Sigmoid colon (tissue), 7 donors: ENCODE measurements at regions of chr2 and their contacts with region 1.

Region 1: DNA sequence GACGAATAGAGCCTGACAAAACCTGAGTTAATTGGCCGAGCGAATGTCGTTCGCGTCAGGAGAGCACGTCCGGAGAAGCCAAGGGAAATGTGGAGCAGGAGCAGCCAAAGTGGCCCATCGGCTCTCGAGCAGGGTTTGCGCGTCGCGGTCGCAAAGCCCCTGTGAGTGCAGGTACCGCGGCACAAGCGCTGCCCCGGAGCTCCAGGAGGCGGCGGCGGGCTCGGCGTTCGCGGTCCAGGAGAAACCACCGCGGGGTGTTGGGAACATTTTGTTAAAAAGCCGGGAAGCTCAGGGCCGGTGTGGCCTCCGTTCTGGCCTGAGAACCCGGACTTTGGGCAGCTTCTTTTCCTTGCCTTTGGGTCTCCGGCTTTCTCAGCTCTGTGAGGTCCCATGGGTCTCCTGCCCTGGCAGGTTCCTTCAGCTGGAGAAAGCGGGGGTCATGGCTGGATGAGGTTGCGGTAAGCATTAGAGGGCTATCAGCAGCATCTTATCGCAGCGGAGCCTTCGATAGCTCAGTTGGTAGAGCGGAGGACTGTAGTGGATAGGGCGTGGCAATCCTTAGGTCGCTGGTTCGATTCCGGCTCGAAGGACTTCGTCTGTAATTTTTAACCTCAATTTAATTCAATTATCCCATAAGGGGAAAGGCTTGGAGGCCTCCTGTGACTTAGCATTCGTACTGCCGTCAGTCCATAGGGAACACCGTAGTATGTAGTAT is 1.0 kb upstream of the AGBL5 start:
- DNase-seq: peak; percentile 96
- H3K4me3 ChIP-seq: peak overlapping the region; percentile 77 to 91 (median 84)
- H3K27ac ChIP-seq: peak overlapping the region; percentile 90 to 96 (median 92)
- H3K4me1 ChIP-seq: peaks cover 0 to 26% (median 17%) of the 10 kb centered on the region in 4 donors
- H3K27me3 ChIP-seq: no peaks in the 10 kb centered on the region
- CTCF ChIP-seq: peak; percentile 51 to 77 (median 62)
- EP300 ChIP-seq: no peak
- POLR2A ChIP-seq: no peak

Region 2: DNA sequence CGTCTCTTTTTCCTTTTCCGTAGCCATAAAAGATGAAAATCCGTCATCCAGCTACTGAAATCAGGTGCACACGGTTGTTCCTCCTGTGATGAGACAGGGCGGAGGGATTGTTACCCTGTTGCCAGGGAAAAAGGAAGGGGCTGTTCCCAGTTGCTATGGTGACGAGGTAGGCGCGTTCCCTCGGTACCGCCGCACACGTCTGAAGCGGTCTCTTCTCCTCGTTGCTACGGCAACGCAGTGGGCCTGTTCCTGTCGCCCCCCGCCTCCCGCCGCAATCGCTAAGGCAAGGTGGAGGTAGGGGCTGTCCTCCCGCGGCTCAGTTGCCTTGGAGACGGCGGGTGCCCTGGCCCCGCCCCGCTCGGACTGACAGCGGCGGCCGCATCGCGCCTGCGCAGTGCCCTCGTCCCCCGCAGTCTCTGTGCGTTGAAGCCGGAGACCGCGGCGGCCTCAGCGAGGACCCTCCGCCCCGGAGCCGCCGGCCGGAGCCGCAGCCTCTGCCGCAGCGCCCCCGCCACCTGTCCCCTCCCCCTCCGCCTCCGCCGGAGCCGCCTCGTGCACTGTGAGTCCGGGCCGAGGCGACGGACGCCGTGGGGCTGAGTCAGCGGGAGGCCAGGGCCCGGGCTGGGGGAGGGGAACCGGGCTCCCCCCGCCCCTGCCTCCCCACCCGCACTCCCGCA is 80.1 kb before region 1 on chr2 and contains the start of gene MAPRE3:
- intact Hi-C with region 1: no loop called
- DNase-seq: peak; percentile 88
- H3K4me3 ChIP-seq: peak within 1 kb of the TSS; percentile 62 to 95 (median 82)
- H3K27ac ChIP-seq: peak within 1 kb of the TSS; percentile 76 to 88 (median 86)
- H3K4me1 ChIP-seq: peaks cover 0 to 24% (median 17%) of the 10 kb centered on the region in 4 donors
- H3K27me3 ChIP-seq: no peaks in the 10 kb centered on the region
- CTCF ChIP-seq: no peak
- EP300 ChIP-seq: no peak
- POLR2A ChIP-seq: no peak
- total RNA-seq, gene MAPRE3: 5.1 to 27.4 (median 8.9) TPM

Region 3: DNA sequence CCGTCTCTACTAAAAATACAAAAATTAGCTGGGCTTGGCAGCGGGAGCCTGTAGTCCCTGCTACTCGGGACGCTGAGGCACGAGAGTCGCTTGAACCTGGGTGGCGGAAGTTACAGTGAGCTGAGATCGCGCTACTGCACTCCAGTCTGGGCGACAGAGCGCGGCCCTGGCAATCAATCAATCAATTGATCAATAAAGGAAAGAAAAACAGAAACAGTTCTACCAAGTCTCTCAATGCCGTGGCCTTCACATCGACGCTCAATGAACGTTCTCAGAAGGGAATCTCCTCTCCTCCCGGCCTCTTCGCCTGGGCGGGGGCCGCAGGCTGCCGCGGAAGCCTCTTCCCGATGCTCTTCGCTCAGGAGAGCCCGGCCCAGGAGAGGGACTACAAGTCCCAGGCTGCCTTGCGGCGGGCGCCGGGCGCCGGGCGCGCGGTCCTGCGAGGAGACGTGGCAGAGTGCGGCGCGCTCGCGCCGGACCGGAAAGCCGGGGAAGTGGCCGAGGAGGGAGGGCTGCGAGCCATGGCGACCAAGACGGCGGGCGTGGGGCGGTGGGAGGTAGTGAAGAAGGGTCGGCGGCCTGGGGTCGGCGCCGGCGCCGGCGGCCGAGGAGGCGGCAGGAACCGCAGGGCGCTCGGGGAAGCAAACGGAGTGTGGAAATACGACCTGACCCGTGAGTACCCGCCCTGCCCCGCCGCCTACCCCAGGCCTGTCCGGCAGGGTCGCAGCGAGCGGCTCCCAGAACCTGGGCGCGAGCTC is 17.8 kb before region 1 on chr2 and contains the start of gene TMEM214:
- intact Hi-C with region 1: loop called (anchors 1 kb)
- DNase-seq: peak; percentile 95
- H3K4me3 ChIP-seq: peak within 1 kb of the TSS; percentile 79 to 97 (median 84)
- H3K27ac ChIP-seq: peak within 1 kb of the TSS; percentile 81 to 89 (median 84)
- H3K4me1 ChIP-seq: peaks cover 0 to 30% (median 23%) of the 10 kb centered on the region in 4 donors
- H3K27me3 ChIP-seq: no peaks in the 10 kb centered on the region
- CTCF ChIP-seq: no peak
- EP300 ChIP-seq: no peak
- POLR2A ChIP-seq: peak; percentile 45 to 59
- total RNA-seq, gene TMEM214: 26.4 to 39.4 (median 35.0) TPM

Region 4: GRCh38 chr2:27071277-27071989 is 21.0 kb after region 1 on chr2 and contains the start of gene OST4:
- intact Hi-C with region 1: loop called (anchors 1 kb)
- DNase-seq: peak; percentile 97
- H3K4me3 ChIP-seq: peak within 1 kb of the TSS; percentile 70 to 94 (median 84)
- H3K27ac ChIP-seq: peak within 1 kb of the TSS; percentile 94 to 98 (median 97)
- H3K4me1 ChIP-seq: peaks cover 0 to 74% (median 68%) of the 10 kb centered on the region in 4 donors
- H3K27me3 ChIP-seq: no peaks in the 10 kb centered on the region
- CTCF ChIP-seq: no peak
- EP300 ChIP-seq: no peak
- POLR2A ChIP-seq: peak; percentile 63 to 76
- total RNA-seq, gene OST4: 244 to 428 (median 382) TPM

Region 5: DNA sequence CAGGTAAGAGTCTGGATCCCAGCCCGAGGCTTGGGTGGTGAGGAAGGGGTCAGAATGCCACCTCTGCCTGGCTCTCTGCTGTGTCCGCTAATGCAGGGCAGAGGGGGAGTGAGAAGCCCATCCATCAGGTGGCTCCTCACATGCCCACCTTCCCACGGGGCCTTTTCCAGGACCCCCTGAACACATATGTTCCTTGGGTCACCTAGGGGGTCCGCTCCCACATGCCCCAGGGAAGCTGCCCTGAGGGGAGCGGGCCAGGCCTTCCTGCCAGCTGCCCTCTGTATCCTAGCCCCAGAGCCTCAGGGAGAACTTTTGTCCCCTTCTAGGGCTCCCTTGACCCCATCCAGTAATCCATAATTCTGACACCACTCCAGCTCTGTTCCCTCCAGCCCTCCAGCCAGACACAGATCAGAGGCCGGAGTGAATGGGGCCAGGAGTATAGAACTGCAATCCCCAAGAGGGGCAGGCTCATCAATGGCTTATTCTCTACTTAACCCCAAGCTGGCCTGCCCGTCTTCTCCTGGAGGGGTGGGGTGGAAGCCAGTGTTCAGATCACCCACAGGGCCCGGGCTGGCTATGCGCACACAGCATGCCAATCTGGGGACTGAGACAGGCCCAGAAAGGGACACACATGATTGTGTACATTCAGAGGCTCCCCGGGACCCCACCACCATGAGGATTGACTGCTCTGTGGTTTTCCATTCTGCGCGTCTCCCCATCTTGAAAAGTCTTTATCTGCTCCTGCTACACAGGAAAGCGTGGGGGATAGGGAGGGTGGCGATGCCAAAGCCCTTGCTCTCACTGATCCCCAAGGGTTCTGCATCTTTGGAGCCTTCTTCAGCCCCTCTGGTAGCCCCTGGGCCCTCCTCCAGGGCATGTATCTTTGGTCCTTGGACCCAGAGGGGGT is 29.0 kb after region 1 on chr2:
- intact Hi-C with region 1: loop called (anchors 1 kb)
- DNase-seq: no peak
- H3K4me3 ChIP-seq: peak overlapping the region; percentile 71 to 91 (median 74)
- H3K27ac ChIP-seq: peak overlapping the region; percentile 94 to 98 (median 97)
- H3K4me1 ChIP-seq: peaks cover 0 to 92% (median 82%) of the 10 kb centered on the region in 4 donors
- H3K27me3 ChIP-seq: no peaks in the 10 kb centered on the region
- CTCF ChIP-seq: no peak
- EP300 ChIP-seq: no peak
- POLR2A ChIP-seq: no peak

Region 6: GRCh38 chr2:27086090-27086723 is 35.8 kb after region 1 on chr2:
- intact Hi-C with region 1: loop called (anchors 1 kb)
- DNase-seq: peak; percentile 97
- H3K4me3 ChIP-seq: peak overlapping the region; percentile 32 to 63 (median 55)
- H3K27ac ChIP-seq: peak overlapping the region; percentile 88 to 98 (median 96)
- H3K4me1 ChIP-seq: peaks cover 0 to 62% (median 58%) of the 10 kb centered on the region in 4 donors
- H3K27me3 ChIP-seq: no peaks in the 10 kb centered on the region
- CTCF ChIP-seq: peak; percentile 47 to 88 (median 63)
- EP300 ChIP-seq: no peak
- POLR2A ChIP-seq: no peak

Region 7: GRCh38 chr2:27133905-27134780 is 83.7 kb after region 1 on chr2 and contains the start of gene PREB:
- intact Hi-C with region 1: loop called (anchors 5 kb)
- DNase-seq: peak; percentile 98
- H3K4me3 ChIP-seq: peak within 1 kb of the TSS; percentile 79 to 100 (median 96)
- H3K27ac ChIP-seq: peak within 1 kb of the TSS; percentile 88 to 94 (median 92)
- H3K4me1 ChIP-seq: peaks cover 0 to 20% (median 19%) of the 10 kb centered on the region in 4 donors
- H3K27me3 ChIP-seq: no peaks in the 10 kb centered on the region
- CTCF ChIP-seq: peak in 1 of 4 experiments; percentile 8
- EP300 ChIP-seq: no peak
- POLR2A ChIP-seq: peak; percentile 82 to 85
- total RNA-seq, gene PREB: 47.6 to 58.5 (median 51.6) TPM